ENCODE measurements at regions of chr20 and their contacts with region 1.

Region 1: DNA sequence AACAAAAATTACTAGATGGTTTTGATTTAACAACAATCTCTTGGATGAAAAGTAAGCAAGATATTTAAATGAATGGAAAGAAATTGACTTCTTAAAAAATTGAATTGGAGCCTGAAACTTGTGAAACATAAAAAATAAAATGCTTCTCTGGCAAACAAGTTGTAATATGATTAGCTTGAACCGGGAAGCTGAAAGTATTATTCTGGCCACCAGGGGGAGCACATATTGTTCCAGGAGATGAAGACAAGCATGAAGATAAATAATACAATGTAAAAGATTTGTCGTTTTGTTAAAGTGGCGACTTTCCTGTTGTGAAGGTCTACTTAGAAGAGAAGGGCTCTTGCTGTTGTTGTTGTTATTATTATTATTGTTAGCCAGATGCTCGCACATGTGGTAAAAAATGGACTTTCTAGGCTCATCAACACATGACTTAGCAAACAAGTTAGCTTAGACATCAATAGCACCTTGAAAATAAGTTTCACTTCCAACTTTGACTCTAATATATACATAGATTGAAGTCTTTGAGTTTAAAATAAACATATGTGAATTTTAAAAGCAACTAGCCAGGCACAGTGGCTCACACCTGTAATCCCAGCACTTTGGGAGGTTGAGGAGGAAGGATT is 14.2 kb downstream of the PAX1 start:
- DNase-seq: peak; percentile 92
- H3K4me3 ChIP-seq: no peak overlapping the region
- H3K27ac ChIP-seq: no peak overlapping the region
- H3K4me1 ChIP-seq: peaks cover 0 to under 1% (median 0%) of the 10 kb centered on the region in 4 donors
- H3K27me3 ChIP-seq: peaks cover 0 to 46% (median 3%) of the 10 kb centered on the region in 4 donors
- CTCF ChIP-seq: peak; percentile 48 to 78 (median 65)
- EP300 ChIP-seq: no peak
- POLR2A ChIP-seq: no peak

Region 2: DNA sequence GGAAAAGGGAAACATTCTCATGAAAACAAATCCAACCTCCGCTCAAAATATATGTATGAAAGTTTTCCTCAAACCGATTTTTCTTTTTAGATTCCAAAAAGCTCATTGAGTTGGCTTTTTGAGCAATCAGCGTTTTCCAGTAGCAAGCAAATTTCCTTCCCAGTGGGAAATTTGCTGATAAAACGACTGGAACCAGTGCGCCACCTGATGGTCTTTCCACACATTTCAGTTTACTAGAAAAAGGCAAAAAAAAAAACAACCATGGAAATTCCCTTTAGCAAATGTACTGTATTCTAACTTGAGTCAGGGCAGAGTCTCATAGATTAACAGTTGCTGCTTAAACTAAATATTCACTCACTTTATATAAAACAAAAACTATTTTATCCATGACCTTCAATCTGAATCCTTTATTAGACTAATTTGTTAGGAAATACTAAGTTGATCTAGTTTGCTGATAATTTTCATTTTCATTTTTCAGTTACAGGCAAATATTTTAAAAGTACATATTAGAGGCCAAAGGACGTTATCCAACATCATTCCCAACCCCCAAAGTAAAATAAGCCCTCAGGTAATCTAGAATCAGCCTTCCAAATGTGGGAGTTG is 593.1 kb after region 1 on chr20:
- intact Hi-C with region 1: loop called (anchors 5 kb)
- DNase-seq: no peak
- H3K4me3 ChIP-seq: no peak overlapping the region
- H3K27ac ChIP-seq: no peak overlapping the region
- H3K4me1 ChIP-seq: no peaks in the 10 kb centered on the region
- H3K27me3 ChIP-seq: no peaks in the 10 kb centered on the region
- CTCF ChIP-seq: peak; percentile 39 to 71 (median 62)
- EP300 ChIP-seq: no peak
- POLR2A ChIP-seq: no peak

Measured in esophagus muscularis mucosa (tissue), 4 donors.